ENCODE measurements at regions of chr14 and their contacts with region 1.

Region 1: GRCh38 chr14:65255536-65256461 is 153.5 kb upstream of the MAX start:
- DNase-seq: peak; percentile 94 to 97
- H3K4me3 ChIP-seq: peak overlapping the region; percentile 13; the same call in 1 of the 2 replicates
- H3K4me3 Mint-ChIP-seq: peak overlapping the region; percentile 65
- H3K27ac Mint-ChIP-seq: peak overlapping the region; percentile 90
- H3K4me1 ChIP-seq: peaks cover 58% of the 10 kb centered on the region
- H3K4me1 Mint-ChIP-seq: peaks cover 37% of the 10 kb centered on the region
- H3K27me3 ChIP-seq: no peaks in the 10 kb centered on the region
- H3K27me3 Mint-ChIP-seq: no peaks in the 10 kb centered on the region
- CTCF ChIP-seq: peak in 1 of 2 experiments; percentile 45

Region 2: GRCh38 chr14:64444984-64445845 is 810.6 kb before region 1 on chr14:
- CTCF ChIA-PET with region 1: no interaction called
- POLR2A ChIA-PET with region 1: no interaction called
- intact Hi-C with region 1: no loop called
- DNase-seq: no peak
- H3K4me3 ChIP-seq: no peak overlapping the region
- H3K4me3 Mint-ChIP-seq: no peak overlapping the region
- H3K27ac Mint-ChIP-seq: no peak overlapping the region
- H3K4me1 ChIP-seq: peaks cover 9% of the 10 kb centered on the region; the same call in 1 of the 2 replicates
- H3K4me1 Mint-ChIP-seq: no peaks in the 10 kb centered on the region
- H3K27me3 ChIP-seq: no peaks in the 10 kb centered on the region
- H3K27me3 Mint-ChIP-seq: no peaks in the 10 kb centered on the region
- CTCF ChIP-seq: no peak

Region 3: GRCh38 chr14:65070455-65070976 is 185.3 kb before region 1 on chr14:
- CTCF ChIA-PET with region 1: no interaction called
- POLR2A ChIA-PET with region 1: no interaction called
- intact Hi-C with region 1: no loop called
- DNase-seq: no peak
- H3K4me3 ChIP-seq: no peak overlapping the region
- H3K4me3 Mint-ChIP-seq: no peak overlapping the region
- H3K27ac Mint-ChIP-seq: no peak overlapping the region
- H3K4me1 ChIP-seq: no peaks in the 10 kb centered on the region
- H3K4me1 Mint-ChIP-seq: peaks cover 10% of the 10 kb centered on the region
- H3K27me3 ChIP-seq: no peaks in the 10 kb centered on the region
- H3K27me3 Mint-ChIP-seq: no peaks in the 10 kb centered on the region
- CTCF ChIP-seq: no peak

Region 4: GRCh38 chr14:65164068-65164824 is 91.6 kb before region 1 on chr14:
- CTCF ChIA-PET with region 1: interaction called, 7 read pairs
- POLR2A ChIA-PET with region 1: no interaction called
- intact Hi-C with region 1: loop called (anchors 1 kb)
- DNase-seq: peak in 1 of 2 experiments; percentile 62
- H3K4me3 ChIP-seq: no peak overlapping the region
- H3K4me3 Mint-ChIP-seq: no peak overlapping the region
- H3K27ac Mint-ChIP-seq: peak overlapping the region; percentile 36
- H3K4me1 ChIP-seq: peaks cover 8% of the 10 kb centered on the region
- H3K4me1 Mint-ChIP-seq: peaks cover 6% of the 10 kb centered on the region
- H3K27me3 ChIP-seq: no peaks in the 10 kb centered on the region
- H3K27me3 Mint-ChIP-seq: no peaks in the 10 kb centered on the region
- CTCF ChIP-seq: peak; percentile 68 to 81

Region 5: GRCh38 chr14:65239143-65239937 is 16.5 kb before region 1 on chr14:
- CTCF ChIA-PET with region 1: interaction called, 12 read pairs
- POLR2A ChIA-PET with region 1: interaction called, 9 read pairs
- intact Hi-C with region 1: loop called (anchors 1 kb)
- DNase-seq: peak; percentile 66 to 89
- H3K4me3 ChIP-seq: no peak overlapping the region
- H3K4me3 Mint-ChIP-seq: peak overlapping the region; percentile 31
- H3K27ac Mint-ChIP-seq: peak overlapping the region; percentile 83
- H3K4me1 ChIP-seq: peaks cover 74% of the 10 kb centered on the region
- H3K4me1 Mint-ChIP-seq: peaks cover 52% of the 10 kb centered on the region
- H3K27me3 ChIP-seq: no peaks in the 10 kb centered on the region
- H3K27me3 Mint-ChIP-seq: no peaks in the 10 kb centered on the region
- CTCF ChIP-seq: no peak

Region 6: GRCh38 chr14:65277580-65278270 is 21.9 kb after region 1 on chr14:
- CTCF ChIA-PET with region 1: no interaction called
- POLR2A ChIA-PET with region 1: interaction called, 3 read pairs
- intact Hi-C with region 1: loop called (anchors 1 kb)
- DNase-seq: no peak
- H3K4me3 ChIP-seq: no peak overlapping the region
- H3K4me3 Mint-ChIP-seq: no peak overlapping the region
- H3K27ac Mint-ChIP-seq: no peak overlapping the region
- H3K4me1 ChIP-seq: peaks cover 33% of the 10 kb centered on the region
- H3K4me1 Mint-ChIP-seq: peaks cover 13% of the 10 kb centered on the region
- H3K27me3 ChIP-seq: no peaks in the 10 kb centered on the region
- H3K27me3 Mint-ChIP-seq: no peaks in the 10 kb centered on the region
- CTCF ChIP-seq: no peak

Region 7: DNA sequence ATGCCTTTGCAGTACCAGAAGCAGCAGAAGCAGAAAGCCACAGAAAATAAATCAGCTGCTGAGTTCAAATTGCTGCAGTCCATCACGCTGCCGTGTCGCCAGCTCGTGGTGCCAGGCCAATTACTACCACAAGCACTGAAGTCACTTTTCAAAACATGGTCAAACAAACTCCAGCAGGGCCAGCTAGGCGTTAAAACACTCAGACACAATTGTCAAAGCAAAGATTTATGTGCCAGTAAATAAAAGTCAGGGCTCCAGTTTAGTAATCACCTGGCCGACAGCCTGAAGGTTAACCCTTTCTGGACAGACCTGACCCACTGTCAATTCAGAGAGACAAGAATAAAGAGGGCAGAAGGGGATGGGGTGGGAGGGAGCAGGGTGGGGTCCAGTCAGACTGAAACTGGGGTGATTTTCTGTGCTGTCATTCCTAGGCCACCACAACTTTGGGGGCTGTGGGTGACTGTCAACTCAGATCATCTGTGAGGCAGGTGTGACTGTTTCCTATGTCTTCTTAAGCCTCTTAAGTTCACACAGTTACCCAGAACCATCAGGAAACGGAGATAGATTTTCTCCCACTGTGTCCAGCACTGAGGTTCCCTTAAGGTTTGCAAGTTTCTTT is 46.9 kb after region 1 on chr14:
- CTCF ChIA-PET with region 1: interaction called, 3 read pairs
- POLR2A ChIA-PET with region 1: no interaction called
- intact Hi-C with region 1: loop called (anchors 2 kb)
- DNase-seq: no peak
- H3K4me3 ChIP-seq: no peak overlapping the region
- H3K4me3 Mint-ChIP-seq: peak overlapping the region; percentile 12
- H3K27ac Mint-ChIP-seq: peak overlapping the region; percentile 80
- H3K4me1 ChIP-seq: peaks cover 67% of the 10 kb centered on the region
- H3K4me1 Mint-ChIP-seq: peaks cover 44% of the 10 kb centered on the region
- H3K27me3 ChIP-seq: no peaks in the 10 kb centered on the region
- H3K27me3 Mint-ChIP-seq: no peaks in the 10 kb centered on the region
- CTCF ChIP-seq: no peak

Region 8: DNA sequence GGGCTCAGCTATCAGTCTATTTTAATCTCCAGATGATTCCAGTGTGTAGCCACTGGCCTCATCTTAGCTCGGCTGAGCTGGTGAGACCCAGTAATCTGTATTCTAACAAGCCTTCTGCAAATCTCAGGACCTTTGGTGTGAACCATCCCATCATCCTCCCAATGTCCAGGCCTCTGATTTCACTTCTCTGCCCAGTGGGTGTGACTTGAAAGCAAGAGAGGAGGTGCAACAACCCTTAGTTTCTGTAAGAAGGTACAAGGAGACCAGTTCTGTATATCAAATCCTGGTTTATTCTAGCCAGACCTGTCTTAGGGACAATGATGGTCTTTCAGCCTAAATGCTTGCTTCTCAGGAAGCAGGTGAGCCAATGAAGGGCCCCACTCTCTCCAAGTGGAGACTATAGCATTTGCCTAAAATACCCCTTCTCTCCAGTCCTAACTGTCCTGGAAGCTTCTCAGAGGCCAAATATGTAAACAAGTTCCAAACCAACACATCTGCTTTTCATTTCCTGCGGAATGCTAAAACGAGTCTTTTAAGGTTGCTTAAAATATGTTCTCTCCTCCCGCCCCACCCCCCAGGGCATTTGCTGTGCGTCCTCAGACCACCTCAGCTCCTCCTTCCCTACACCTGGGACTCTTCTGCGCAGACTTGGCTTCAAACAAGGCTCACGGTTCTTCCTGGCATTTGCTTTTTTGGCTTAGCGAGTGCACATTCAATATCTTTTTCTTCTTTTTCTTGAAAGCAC is 78.3 kb after region 1 on chr14:
- CTCF ChIA-PET with region 1: interaction called, 10 read pairs
- POLR2A ChIA-PET with region 1: no interaction called
- intact Hi-C with region 1: loop called (anchors 1 kb)
- DNase-seq: peak; percentile 60 to 78
- H3K4me3 ChIP-seq: no peak overlapping the region
- H3K4me3 Mint-ChIP-seq: peak overlapping the region; percentile 63
- H3K27ac Mint-ChIP-seq: peak overlapping the region; percentile 96
- H3K4me1 ChIP-seq: peaks cover 96% of the 10 kb centered on the region
- H3K4me1 Mint-ChIP-seq: peaks cover 52% of the 10 kb centered on the region
- H3K27me3 ChIP-seq: no peaks in the 10 kb centered on the region
- H3K27me3 Mint-ChIP-seq: no peaks in the 10 kb centered on the region
- CTCF ChIP-seq: no peak